ENCODE measurements at regions of chr5 and their contacts with region 1.

Region 1: GRCh38 chr5:142726188-142726731 is 40.4 kb upstream of the FGF1 start:
- DNase-seq: peak; percentile 65
- H3K4me3 ChIP-seq: no peak overlapping the region
- CTCF ChIP-seq: no peak

Region 2: DNA sequence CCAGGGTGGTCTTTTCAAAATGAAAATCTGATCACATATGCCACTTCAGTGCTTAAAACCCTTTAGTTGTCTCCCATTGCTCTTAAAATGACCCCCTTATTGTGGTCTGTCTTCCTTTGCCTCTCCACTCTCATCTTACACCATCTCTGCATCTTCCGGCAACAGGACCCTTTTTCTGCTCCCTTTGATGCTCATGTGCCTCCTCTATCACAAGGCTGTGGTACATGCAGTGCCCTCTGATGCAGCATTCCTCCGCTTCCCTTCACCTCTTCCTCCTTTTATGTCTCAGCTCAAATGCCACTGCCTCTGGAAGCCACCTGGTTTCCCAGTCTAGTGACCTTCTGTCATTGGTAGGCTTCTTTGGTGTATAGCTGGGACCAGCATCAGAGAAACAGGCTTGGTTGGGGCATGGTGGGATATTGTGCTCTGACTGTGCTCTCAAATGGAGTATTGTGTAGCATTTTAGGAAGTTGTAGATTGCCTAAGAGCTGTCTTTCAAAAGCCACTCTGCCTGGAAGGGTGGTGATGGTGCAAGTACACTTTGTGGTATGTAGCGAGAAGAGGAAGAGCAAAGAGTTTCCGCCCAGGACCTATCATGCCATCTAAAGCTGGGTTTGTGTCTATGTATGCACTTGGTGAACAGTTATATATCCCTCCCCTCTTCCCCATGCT is 72.0 kb after region 1 on chr5:
- in situ Hi-C with region 1: loop called (anchors 5 kb)
- DNase-seq: no peak
- H3K4me3 ChIP-seq: no peak overlapping the region
- CTCF ChIP-seq: no peak

Region 3: GRCh38 chr5:143119291-143119769 is 393.1 kb after region 1 on chr5:
- in situ Hi-C with region 1: no loop called
- DNase-seq: no peak
- H3K4me3 ChIP-seq: no peak overlapping the region
- CTCF ChIP-seq: no peak

Measured in astrocyte of the cerebellum (primary cell).